ENCODE measurements at regions of chrX and their contacts with region 1.

Region 1: GRCh38 chrX:47247206-47247998 is 14.6 kb downstream of the USP11 start:
- DNase-seq: no peak
- H3K4me3 ChIP-seq: no peak overlapping the region
- H3K27ac ChIP-seq: no peak overlapping the region
- H3K4me1 ChIP-seq: no peaks in the 10 kb centered on the region
- H3K27me3 ChIP-seq: no peaks in the 10 kb centered on the region
- CTCF ChIP-seq: no peak
- POLR2A ChIP-seq: no peak

Region 2: DNA sequence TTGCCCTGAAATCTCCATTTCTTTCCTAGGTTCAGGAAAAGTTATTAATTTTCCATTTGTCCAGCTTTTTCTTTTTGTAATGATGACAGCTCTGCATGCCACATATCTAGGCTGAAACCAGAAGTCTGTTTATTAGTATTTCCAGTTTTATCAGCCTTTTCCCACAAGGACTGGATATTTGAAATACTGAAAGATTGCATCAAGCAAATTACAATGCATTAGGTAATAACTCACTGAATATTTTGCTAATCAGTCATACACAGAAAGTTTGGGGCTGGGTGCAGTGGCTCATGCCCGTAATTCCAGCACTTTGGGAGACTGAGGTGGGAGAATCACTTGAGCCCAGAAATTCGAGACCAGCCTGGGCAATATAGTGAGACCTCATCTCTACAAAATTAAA is 509.9 kb before region 1 on chrX:
- intact Hi-C with region 1: no loop called
- DNase-seq: no peak
- H3K4me3 ChIP-seq: no peak overlapping the region
- H3K27ac ChIP-seq: no peak overlapping the region
- H3K4me1 ChIP-seq: no peaks in the 10 kb centered on the region
- H3K27me3 ChIP-seq: no peaks in the 10 kb centered on the region
- CTCF ChIP-seq: no peak
- POLR2A ChIP-seq: no peak

Region 3: DNA sequence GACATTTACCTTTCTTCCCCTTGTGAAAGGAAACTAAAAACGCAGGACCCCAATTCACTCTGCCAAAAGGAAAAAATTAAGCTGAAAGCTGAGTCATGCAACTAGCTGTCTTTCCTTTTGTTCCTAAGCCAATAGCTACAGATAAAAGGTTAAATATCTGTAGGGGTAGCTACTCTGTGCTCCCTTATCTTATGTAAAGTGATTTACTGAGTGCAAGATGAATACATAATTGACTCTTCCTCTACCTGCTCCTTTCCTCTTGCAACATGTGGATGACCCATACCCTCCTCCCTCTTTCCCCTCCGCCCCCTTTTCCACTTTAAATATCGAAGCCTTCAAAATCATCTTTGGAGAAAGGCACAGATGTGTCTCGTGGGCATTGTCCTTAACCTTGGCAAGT is 55.0 kb after region 1 on chrX:
- intact Hi-C with region 1: loop called in 1 of 2 experiments (anchors 10 kb)
- DNase-seq: peak in 1 of 7 donors; percentile 6
- H3K4me3 ChIP-seq: no peak overlapping the region
- H3K27ac ChIP-seq: no peak overlapping the region
- H3K4me1 ChIP-seq: no peaks in the 10 kb centered on the region
- H3K27me3 ChIP-seq: peaks cover 17% of the 10 kb centered on the region
- CTCF ChIP-seq: no peak
- POLR2A ChIP-seq: no peak

Measured in adrenal gland (tissue), 19 donors.